Activated CD4-positive, alpha-beta T cell treated with anti-CD3 and anti-CD28 coated beads, Interleukin-2, amount 10 ng/mL, durations not matched to agents 24 days and 14 days (primary cell): ENCODE measurements at regions of chr11 and their contacts with region 1.

Region 1: GRCh38 chr11:68271781-68272608 is at the start of gene C11orf24:
- DNase-seq: peak; percentile 98
- H3K4me3 Mint-ChIP-seq: peak within 1 kb of the TSS; percentile 94
- H3K27ac Mint-ChIP-seq: peak within 1 kb of the TSS; percentile 92
- H3K4me1 Mint-ChIP-seq: peaks cover 26% of the 10 kb centered on the region
- H3K27me3 Mint-ChIP-seq: no peaks in the 10 kb centered on the region
- total RNA-seq, gene C11orf24: 38.0 and 43.2 TPM in 2 replicates

Region 2: DNA sequence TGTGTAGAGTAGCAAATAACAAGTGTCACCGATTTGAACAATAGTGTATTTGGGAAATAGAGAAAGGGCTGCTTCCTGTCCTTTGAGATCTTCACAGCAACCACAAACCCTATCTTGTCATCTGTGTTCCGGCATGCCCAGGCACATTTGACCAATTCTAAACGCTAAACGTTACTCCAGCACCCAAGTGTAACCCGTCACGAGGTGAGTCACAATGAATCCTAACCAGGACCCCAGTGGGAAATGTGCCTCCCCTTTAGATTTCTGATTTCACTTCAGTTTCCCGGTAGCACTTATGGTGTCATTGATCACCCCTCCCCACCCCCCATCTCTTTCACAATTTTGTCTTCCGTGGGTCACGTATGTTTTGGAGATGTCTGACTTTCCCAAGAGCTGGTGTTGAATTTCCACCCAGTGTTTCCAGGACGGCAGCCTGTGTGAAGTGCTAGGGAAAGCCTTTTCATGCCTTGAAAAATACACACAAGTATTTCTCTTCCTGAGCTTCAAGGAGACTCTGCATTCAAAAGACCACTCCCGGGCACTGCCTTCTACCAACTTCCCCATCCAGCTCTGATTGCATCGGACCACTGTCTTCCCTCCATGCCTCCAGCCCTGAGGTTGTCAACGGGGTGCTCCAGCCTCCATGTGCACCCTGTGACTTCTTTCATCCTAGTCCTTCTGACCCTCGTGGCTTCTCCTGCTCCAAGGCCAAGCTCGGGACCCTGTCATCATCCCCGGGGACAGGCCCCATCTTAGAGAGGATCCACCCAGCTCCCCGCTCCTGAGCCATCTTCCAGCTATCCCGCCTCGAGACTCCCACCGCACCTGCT is 10.4 kb after region 1 on chr11:
- intact Hi-C with region 1: loop called (anchors 1 kb)
- DNase-seq: peak; percentile 85
- H3K4me3 Mint-ChIP-seq: peak overlapping the region; percentile 72
- H3K27ac Mint-ChIP-seq: peak overlapping the region; percentile 64
- H3K4me1 Mint-ChIP-seq: peaks cover 26% of the 10 kb centered on the region
- H3K27me3 Mint-ChIP-seq: peaks cover under 1% of the 10 kb centered on the region

Region 3: DNA sequence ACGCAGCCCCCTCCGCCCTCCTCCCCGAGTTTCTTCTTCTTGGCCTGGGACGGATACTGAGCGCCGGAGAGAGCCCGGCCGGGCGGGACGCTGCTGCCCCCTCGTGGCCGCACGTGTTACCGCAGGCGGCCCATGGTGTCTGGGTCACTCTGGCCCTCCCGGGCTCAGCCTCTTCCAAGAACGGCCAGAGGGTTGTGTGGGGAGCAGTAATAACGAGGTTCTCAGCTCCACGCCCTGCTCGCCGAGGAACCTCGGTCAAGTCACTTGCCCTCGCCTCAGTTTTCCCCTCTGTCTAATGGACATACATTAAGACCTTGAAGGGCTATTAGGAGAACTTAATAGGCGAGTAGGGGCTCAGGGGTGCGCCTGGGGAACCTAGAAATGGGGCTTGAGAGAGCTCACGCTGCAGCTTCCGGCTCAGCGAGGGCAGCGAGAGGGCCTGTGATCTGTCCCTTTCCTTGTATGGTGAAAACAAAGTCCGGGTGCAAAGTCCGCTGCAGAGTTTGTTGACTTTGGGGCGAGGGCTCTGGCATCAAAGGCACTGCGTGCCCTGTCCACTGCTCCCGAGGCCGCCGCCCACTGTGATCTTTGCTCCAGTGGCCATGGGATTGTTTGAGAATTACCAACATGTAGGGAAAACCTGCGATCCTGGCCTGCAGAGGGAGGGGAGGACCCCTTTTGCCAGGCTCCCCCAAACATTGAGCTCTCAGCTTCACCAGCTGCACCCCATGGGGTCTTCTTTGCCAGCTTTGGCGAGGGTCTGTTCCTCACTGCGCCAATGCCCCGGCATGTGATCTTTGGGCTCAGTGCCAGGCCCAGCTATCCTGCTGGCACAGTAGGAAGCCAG is 26.0 kb after region 1 on chr11:
- intact Hi-C with region 1: loop called (anchors 1 kb)
- DNase-seq: peak; percentile 94
- H3K4me3 Mint-ChIP-seq: no peak overlapping the region
- H3K27ac Mint-ChIP-seq: no peak overlapping the region
- H3K4me1 Mint-ChIP-seq: peaks cover 4% of the 10 kb centered on the region
- H3K27me3 Mint-ChIP-seq: peaks cover 4% of the 10 kb centered on the region